CD4-positive, alpha-beta T cell (primary cell): ENCODE measurements at regions of chr5 and their contacts with region 1.

Region 1: GRCh38 chr5:149960272-149961185 is at the start of gene SLC26A2:
- DNase-seq: peak; percentile 85 to 97 (median 90)
- ATAC-seq: peak; percentile 97
- H3K4me3 ChIP-seq: peak within 1 kb of the TSS; percentile 98
- H3K4me3 Mint-ChIP-seq: peak within 1 kb of the TSS; percentile 93
- H3K27ac ChIP-seq: peak within 1 kb of the TSS; percentile 67 to 87
- H3K27ac Mint-ChIP-seq: peak within 1 kb of the TSS; percentile 93
- H3K4me1 ChIP-seq: peaks cover 28% of the 10 kb centered on the region
- H3K4me1 Mint-ChIP-seq: peaks cover 32% of the 10 kb centered on the region
- H3K27me3 ChIP-seq: no peaks in the 10 kb centered on the region
- H3K27me3 Mint-ChIP-seq: no peaks in the 10 kb centered on the region
- CTCF ChIP-seq: no peak
- total RNA-seq, gene SLC26A2: 2.8 to 4.2 TPM

Region 2: GRCh38 chr5:149667084-149667828 is 293.3 kb before region 1 on chr5:
- CTCF ChIA-PET with region 1: no interaction called
- POLR2A ChIA-PET with region 1: no interaction called
- intact Hi-C with region 1: no loop called
- DNase-seq: peak in 3 of 14 experiments; percentile 21 to 55 (median 45)
- ATAC-seq: no peak
- H3K4me3 ChIP-seq: no peak overlapping the region
- H3K4me3 Mint-ChIP-seq: no peak overlapping the region
- H3K27ac ChIP-seq: no peak overlapping the region
- H3K27ac Mint-ChIP-seq: no peak overlapping the region
- H3K4me1 ChIP-seq: no peaks in the 10 kb centered on the region
- H3K4me1 Mint-ChIP-seq: no peaks in the 10 kb centered on the region
- H3K27me3 ChIP-seq: no peaks in the 10 kb centered on the region
- H3K27me3 Mint-ChIP-seq: peaks cover 11% of the 10 kb centered on the region
- CTCF ChIP-seq: peak; percentile 53

Region 3: GRCh38 chr5:149731639-149732323 is 228.7 kb before region 1 on chr5:
- CTCF ChIA-PET with region 1: no interaction called
- POLR2A ChIA-PET with region 1: interaction called, 7 read pairs
- intact Hi-C with region 1: loop called in 1 of 2 experiments (anchors 5 kb)
- DNase-seq: peak; percentile 33 to 90 (median 67)
- ATAC-seq: peak; percentile 52
- H3K4me3 ChIP-seq: peak overlapping the region; percentile 91
- H3K4me3 Mint-ChIP-seq: peak overlapping the region; percentile 92
- H3K27ac ChIP-seq: no peak overlapping the region
- H3K27ac Mint-ChIP-seq: peak overlapping the region; percentile 70
- H3K4me1 ChIP-seq: peaks cover 13% of the 10 kb centered on the region
- H3K4me1 Mint-ChIP-seq: peaks cover 7% of the 10 kb centered on the region
- H3K27me3 ChIP-seq: peaks cover 0 to 3% of the 10 kb centered on the region in 2 experiments
- H3K27me3 Mint-ChIP-seq: no peaks in the 10 kb centered on the region
- CTCF ChIP-seq: no peak

Region 4: DNA sequence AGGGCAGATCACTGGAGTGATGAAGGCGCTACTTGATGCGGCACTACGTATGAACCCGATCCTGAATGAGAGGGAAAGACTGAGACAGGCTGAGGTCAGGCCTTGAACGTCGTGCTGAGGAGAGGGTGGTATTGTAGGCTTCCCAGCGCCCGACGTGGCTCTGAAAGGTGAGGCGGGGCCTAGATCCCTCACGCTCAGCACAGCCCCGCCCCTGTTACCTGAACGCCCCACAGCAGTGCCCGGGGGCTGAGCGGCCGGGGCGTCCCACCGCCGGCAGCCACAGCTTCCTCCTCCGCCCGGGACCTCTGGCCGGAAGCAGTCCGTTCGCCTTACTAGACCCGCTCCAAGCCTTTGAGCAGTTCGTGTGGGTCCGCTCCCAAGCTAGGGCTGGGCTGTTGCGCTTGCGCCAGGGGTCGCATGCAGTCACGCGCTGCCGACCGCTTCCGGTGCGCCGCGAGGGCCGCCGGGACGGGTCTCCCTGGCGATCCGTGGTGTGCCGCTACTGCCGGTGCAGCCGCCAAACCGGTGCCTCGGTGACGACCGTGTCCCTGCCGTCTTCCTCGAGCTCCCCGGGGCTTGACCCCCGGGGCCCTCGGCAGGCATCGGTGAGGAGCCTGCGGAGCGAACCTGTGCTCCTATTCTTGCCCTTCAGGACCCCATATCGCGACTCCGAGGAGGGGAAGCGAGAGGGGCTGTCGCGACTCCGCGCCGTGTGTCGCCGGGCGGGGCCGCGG is 39.9 kb after region 1 on chr5 and contains the starts of genes HMGXB3 and TIGD6:
- CTCF ChIA-PET with region 1: interaction called, 11 read pairs
- POLR2A ChIA-PET with region 1: interaction called, 22 read pairs
- intact Hi-C with region 1: loop called (anchors 1 to 5 kb)
- DNase-seq: peak; percentile 65 to 94 (median 76)
- ATAC-seq: peak; percentile 82
- H3K4me3 ChIP-seq: peak within 1 kb of the TSS; percentile 70
- H3K4me3 Mint-ChIP-seq: peak within 1 kb of the TSS; percentile 96
- H3K27ac ChIP-seq: peak within 1 kb of the TSS; percentile 72 to 79
- H3K27ac Mint-ChIP-seq: peak within 1 kb of the TSS; percentile 95
- H3K4me1 ChIP-seq: peaks cover 34% of the 10 kb centered on the region
- H3K4me1 Mint-ChIP-seq: peaks cover 38% of the 10 kb centered on the region
- H3K27me3 ChIP-seq: no peaks in the 10 kb centered on the region
- H3K27me3 Mint-ChIP-seq: no peaks in the 10 kb centered on the region
- CTCF ChIP-seq: no peak
- total RNA-seq, gene HMGXB3: 27.4 to 29.3 TPM
- total RNA-seq, gene TIGD6: 1.0 to 1.4 TPM